Heart right ventricle (tissue), 16 donors: ENCODE measurements at regions of chr2 and their contacts with region 1.

Region 1: DNA sequence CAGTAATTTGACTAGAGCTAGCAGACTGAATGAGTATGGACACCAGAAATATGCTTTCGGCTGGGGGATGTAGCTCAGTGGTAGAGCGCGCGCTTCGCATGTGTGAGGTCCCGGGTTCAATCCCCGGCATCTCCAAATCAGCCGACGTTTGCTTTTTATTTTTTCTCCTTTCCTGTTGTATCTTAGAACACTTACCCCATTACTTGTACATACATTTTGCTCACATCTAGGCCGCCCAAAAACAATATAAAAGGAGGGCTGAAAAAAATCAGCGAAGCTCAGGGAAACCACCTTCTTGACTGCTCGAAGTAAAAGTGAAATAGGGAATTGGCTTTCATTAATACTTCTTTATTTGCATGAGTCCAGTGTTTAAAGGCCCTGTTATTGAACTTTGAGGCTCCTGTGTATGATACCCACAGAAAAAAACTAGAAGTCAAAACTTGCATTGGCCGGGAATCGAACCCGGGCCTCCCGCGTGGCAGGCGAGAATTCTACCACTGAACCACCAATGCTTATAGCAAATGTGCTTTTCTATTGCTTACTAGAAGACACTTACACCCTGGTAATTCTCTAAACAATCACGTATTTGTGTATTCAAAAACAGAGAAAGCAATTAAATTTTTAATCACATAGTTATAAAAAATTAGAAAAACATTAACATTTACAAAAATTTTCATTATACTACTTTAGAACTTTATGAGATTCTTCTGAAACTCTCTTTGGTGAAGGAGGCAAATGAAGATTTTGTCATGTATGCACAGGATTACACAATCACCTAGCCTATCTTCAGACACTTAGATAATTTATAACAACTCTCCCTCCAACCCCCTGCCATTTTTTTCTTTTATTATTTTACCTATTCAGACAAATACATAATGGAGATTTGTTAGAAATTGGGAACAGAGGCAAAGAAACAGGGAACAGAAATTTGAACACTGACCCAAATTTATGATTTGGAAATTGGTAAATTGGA is 35.2 kb upstream of the GPD2 start:
- DNase-seq: peak; percentile 59 to 79
- ATAC-seq: peak; percentile 90 to 97 (median 92)
- H3K4me3 ChIP-seq: peak overlapping the region; percentile 51 to 85 (median 75)
- H3K27ac ChIP-seq: peak overlapping the region; percentile 52 to 97 (median 89)
- H3K4me1 ChIP-seq: peaks cover 0 to 26% (median 7%) of the 10 kb centered on the region in 9 donors
- H3K27me3 ChIP-seq: peaks cover 0 to 3% (median 0%) of the 10 kb centered on the region in 7 donors
- CTCF ChIP-seq: no peak

Region 2: DNA sequence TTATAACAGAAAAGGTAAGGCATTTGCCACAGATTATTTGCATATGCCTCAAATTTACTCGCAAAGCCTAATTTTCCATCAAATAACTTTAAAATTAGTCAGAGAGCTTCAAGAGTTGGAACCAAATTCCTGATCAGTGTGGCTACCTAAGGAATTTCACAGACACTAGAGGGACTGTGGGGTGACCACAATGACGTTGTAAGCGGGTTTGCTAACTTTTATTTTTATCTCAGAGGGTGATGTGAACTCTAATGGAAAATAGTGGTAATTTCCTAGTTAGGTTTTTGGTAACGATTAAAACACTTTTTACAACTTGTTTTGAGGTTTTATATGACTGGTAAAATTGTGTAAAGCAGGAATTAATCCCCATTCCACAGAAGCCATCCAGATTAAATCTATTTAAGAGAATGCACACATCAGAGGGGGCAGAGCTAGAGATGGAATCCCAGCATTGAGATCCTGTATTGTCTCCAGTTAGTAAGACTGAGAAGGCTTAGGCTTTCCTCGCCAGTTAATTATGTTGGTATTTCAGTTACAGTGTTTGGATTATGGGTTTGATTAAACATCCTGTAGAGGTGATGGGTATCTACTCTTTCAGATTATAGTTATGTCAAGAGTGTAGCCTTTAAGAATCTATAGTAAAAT is 164.2 kb after region 1 on chr2:
- intact Hi-C with region 1: loop called in 1 of 10 experiments (anchors 10 kb)
- DNase-seq: no peak
- ATAC-seq: no peak
- H3K4me3 ChIP-seq: no peak overlapping the region
- H3K27ac ChIP-seq: no peak overlapping the region
- H3K4me1 ChIP-seq: peaks cover 0 to 18% (median 6%) of the 10 kb centered on the region in 9 donors
- H3K27me3 ChIP-seq: no peaks in the 10 kb centered on the region
- CTCF ChIP-seq: no peak